Activated CD4-positive, alpha-beta memory T cell treated with anti-CD3 and anti-CD28 coated beads for 36 hours (primary cell): ENCODE measurements at regions of chr5 and their contacts with region 1.

Region 1: GRCh38 chr5:32613050-32613672 is 27.8 kb downstream of the SUB1 start:
- DNase-seq: peak; percentile 90
- H3K4me3 Mint-ChIP-seq: no peak overlapping the region
- H3K27ac Mint-ChIP-seq: no peak overlapping the region
- H3K4me1 Mint-ChIP-seq: peaks cover 4% of the 10 kb centered on the region
- H3K27me3 Mint-ChIP-seq: no peaks in the 10 kb centered on the region

Region 2: DNA sequence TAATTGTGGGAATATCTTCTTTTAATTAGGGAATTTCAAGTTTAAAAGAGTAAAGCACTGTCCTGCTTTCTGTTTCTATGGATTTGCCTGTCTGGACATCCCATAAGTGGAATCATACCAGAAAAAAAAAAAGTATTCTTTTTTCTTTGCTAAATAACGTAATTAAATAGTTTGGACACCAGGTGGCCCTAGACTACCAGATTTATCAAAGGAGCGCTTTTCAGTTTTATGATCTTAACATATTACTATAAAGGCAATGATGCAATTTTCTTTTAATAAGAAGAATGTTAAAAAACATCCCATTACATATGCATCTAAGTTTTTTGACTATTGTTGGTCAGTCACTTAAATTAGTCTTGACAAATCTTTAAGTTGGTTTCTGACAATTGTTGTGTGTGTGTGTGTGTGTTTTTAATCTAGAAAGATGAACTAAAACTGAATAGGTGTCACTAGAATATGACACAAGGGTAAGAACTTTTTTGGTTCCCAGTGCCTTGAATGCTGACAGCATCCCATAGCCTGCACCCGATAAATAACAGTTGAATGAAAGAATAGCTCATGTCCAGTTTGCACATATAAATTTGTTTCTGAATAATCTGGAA is 1031.6 kb before region 1 on chr5:
- CTCF ChIA-PET with region 1: no interaction called
- POLR2A ChIA-PET with region 1: no interaction called
- intact Hi-C with region 1: loop called (anchors 2 kb)
- DNase-seq: no peak
- H3K4me3 Mint-ChIP-seq: no peak overlapping the region
- H3K27ac Mint-ChIP-seq: no peak overlapping the region
- H3K4me1 Mint-ChIP-seq: no peaks in the 10 kb centered on the region
- H3K27me3 Mint-ChIP-seq: peaks cover 12% of the 10 kb centered on the region

Region 3: GRCh38 chr5:32394981-32395380 is 218.2 kb before region 1 on chr5:
- CTCF ChIA-PET with region 1: no interaction called
- POLR2A ChIA-PET with region 1: no interaction called
- intact Hi-C with region 1: no loop called
- DNase-seq: no peak
- H3K4me3 Mint-ChIP-seq: no peak overlapping the region
- H3K27ac Mint-ChIP-seq: no peak overlapping the region
- H3K4me1 Mint-ChIP-seq: peaks cover 3% of the 10 kb centered on the region
- H3K27me3 Mint-ChIP-seq: no peaks in the 10 kb centered on the region

Region 4: DNA sequence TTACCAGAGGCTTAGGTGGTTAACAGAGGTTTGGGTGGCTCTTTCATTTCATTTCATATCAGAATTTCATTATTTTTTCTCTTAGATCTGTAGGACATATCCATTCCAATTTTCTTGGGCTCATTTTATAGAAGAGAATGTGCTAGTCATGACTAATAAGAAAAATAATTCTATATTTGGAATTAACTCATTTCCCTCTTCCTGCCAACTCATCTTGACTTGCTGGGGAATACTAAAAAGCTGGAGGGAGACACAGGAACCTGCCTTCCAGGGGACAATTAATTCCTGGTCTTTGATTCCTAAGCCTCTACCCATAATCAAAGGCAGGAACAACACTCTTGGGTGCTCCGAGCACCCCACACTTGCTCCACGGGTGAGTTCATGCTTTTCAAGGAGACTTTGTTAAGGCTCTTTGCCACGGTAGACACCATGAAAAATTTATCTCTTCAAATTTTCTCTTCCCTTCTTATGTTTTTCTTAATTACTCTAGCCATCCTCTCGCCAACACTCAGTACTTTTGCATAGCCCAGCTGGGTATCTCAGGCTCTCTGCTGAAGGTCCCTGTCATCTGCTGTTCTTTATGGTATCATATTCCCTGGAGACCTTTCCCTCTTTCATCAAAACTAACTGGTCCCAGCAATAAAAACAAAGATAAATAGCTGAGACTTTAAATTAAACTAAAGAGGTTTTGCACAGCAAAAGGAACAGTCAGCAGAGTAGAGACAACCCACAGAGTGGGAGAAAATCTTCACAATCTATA is 371.9 kb after region 1 on chr5:
- CTCF ChIA-PET with region 1: no interaction called
- POLR2A ChIA-PET with region 1: no interaction called
- intact Hi-C with region 1: no loop called
- DNase-seq: no peak
- H3K4me3 Mint-ChIP-seq: no peak overlapping the region
- H3K27ac Mint-ChIP-seq: no peak overlapping the region
- H3K4me1 Mint-ChIP-seq: no peaks in the 10 kb centered on the region
- H3K27me3 Mint-ChIP-seq: no peaks in the 10 kb centered on the region